ENCODE measurements at regions of chr9 and their contacts with region 1.

Region 1: GRCh38 chr9:7234143-7234542 is 476.4 kb downstream of the KDM4C start:
- DNase-seq: no peak
- H3K4me3 ChIP-seq: no peak overlapping the region
- H3K27me3 ChIP-seq: 0 out of 2 replicates have a peak, but pooled peaks cover 2% of the 10 kb centered on the region
- CTCF ChIP-seq: peak; percentile 62

Region 2: DNA sequence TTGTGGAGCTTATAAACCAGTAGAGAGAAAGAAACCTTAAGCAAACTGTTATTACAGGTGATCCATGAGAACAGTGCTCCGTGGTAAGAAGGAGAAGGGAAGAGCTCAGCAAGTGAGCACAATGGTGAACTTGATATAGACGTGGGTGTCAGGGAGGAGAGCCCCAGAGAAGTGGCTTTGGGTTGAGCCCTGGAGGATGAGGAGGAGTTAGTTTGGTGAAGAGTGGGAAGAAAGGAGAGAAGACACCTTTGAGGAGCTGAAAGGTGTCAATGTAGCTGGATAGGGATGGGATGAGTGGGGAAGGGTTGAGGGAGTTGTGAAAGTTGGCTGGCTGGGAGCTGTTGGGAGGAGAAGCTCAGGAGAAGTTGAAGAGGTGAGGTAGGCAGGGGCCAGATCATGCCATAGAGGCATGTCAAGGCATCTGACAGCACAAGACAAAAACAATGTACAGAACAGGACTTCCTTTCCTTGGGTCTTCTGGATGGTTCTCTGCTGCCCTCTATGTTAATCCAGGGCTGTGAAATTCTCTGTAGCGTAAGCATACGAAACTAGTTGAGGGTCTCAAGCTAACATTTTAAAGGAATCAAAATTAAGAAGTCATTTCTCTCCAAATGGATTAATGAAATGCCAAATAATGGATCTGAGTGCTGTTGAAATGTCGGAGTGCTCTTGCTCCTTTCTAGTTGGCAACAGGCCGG is 25.6 kb after region 1 on chr9:
- CTCF ChIA-PET with region 1: interaction called, 10 read pairs
- POLR2A ChIA-PET with region 1: no interaction called
- DNase-seq: no peak
- H3K4me3 ChIP-seq: no peak overlapping the region
- H3K27me3 ChIP-seq: no peaks in the 10 kb centered on the region
- CTCF ChIP-seq: no peak

Measured in BJ (cell line).